ENCODE measurements at regions of chr4 and their contacts with region 1.

Region 1: GRCh38 chr4:15681207-15682015 is at the start of gene FAM200B:
- DNase-seq: peak; percentile 99 to 100
- H3K4me3 ChIP-seq: peak within 1 kb of the TSS; percentile 86 to 97 (median 91)
- H3K27ac ChIP-seq: peak within 1 kb of the TSS; percentile 91
- H3K4me1 ChIP-seq: peaks cover 2 to 15% (median 12%) of the 10 kb centered on the region in 4 experiments; a peak in 4 of 7 replicates
- H3K27me3 ChIP-seq: no peaks in the 10 kb centered on the region
- CTCF ChIP-seq: peak in 1 of 3 experiments; percentile 26; a peak in 1 of 4 replicates
- EP300 ChIP-seq: no peak
- POLR2A ChIP-seq: peak; percentile 88 to 90
- RAD21 ChIP-seq: peak in 1 of 2 experiments; percentile 22; a peak in 2 of 4 replicates
- total RNA-seq, gene FAM200B: 21.9 and 23.7 TPM in 2 replicates

Region 2: DNA sequence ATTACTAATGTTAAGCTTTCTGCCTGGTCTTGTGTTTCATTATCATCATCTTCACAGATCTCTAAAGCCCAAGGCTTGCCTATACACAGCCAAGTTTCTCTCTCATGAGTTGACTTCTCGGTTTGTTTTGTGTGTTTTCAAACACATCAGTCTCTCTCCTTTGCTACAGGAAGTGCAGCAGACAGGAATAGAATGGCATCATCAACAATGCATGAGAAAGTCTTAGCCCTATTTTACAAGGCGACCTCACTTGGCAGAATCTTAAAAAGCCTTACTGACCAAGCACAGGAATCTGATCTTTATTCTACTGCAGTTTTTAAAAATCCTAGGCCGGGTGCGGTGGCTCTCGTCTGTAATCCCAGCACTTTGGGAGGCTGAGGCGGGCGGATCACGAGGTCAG is 174.9 kb before region 1 on chr4:
- CTCF ChIA-PET with region 1: no interaction called
- POLR2A ChIA-PET with region 1: no interaction called
- DNase-seq: no peak
- H3K4me3 ChIP-seq: no peak overlapping the region
- H3K27ac ChIP-seq: no peak overlapping the region
- H3K4me1 ChIP-seq: 0 out of 7 replicates have a peak, but pooled peaks cover 0 to 1% (median 0%) of the 10 kb centered on the region in 4 experiments
- H3K27me3 ChIP-seq: no peaks in the 10 kb centered on the region
- CTCF ChIP-seq: no peak
- EP300 ChIP-seq: no peak
- POLR2A ChIP-seq: no peak
- RAD21 ChIP-seq: no peak

Region 3: GRCh38 chr4:15665753-15666365 is 15.6 kb before region 1 on chr4:
- CTCF ChIA-PET with region 1: interaction called, 8 read pairs
- POLR2A ChIA-PET with region 1: interaction called, 10 read pairs
- DNase-seq: no peak
- H3K4me3 ChIP-seq: no peak overlapping the region
- H3K27ac ChIP-seq: no peak overlapping the region
- H3K4me1 ChIP-seq: no peaks in the 10 kb centered on the region
- H3K27me3 ChIP-seq: no peaks in the 10 kb centered on the region
- CTCF ChIP-seq: no peak
- EP300 ChIP-seq: no peak
- POLR2A ChIP-seq: no peak
- RAD21 ChIP-seq: no peak

Measured in H1 (cell line).